ENCODE measurements at regions of chr1 and their contacts with region 1.

Region 1: GRCh38 chr1:93061895-93062792 is 16.9 kb upstream of the MTF2 start:
- DNase-seq: peak; percentile 86
- H3K4me3 ChIP-seq: no peak overlapping the region
- H3K27ac ChIP-seq: peak overlapping the region; percentile 44
- H3K4me1 ChIP-seq: peaks cover 28% of the 10 kb centered on the region
- CTCF ChIP-seq: peak; percentile 99

Region 2: DNA sequence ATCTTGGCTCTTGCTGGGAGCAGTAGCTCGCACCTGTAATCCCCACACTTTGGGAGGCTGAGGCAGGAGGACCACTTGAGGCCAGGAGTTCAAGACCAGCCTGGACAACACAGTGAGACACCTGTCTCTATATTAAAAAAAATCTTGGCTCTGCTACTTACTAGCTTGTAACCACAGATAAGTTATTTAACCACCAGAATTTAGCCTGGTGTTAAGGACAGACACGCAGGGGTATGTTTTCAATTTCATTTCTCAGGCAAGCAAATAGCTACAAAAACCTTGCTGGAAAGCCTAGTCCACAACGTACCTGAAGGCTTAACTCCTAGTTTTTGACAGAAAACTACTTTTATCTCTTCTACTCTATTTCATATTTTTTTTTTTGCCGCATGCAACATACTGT is 550.6 kb before region 1 on chr1:
- CTCF ChIA-PET with region 1: no interaction called
- POLR2A ChIA-PET with region 1: no interaction called
- intact Hi-C with region 1: no loop called
- DNase-seq: no peak
- H3K4me3 ChIP-seq: no peak overlapping the region
- H3K27ac ChIP-seq: no peak overlapping the region
- H3K4me1 ChIP-seq: no peaks in the 10 kb centered on the region
- CTCF ChIP-seq: no peak

Region 3: GRCh38 chr1:92858564-92859399 is 203.4 kb before region 1 on chr1:
- CTCF ChIA-PET with region 1: interaction called, 3 read pairs
- POLR2A ChIA-PET with region 1: interaction called, 4 read pairs
- intact Hi-C with region 1: loop called (anchors 1 kb)
- DNase-seq: peak; percentile 91
- H3K4me3 ChIP-seq: peak overlapping the region; percentile 56
- H3K27ac ChIP-seq: peak overlapping the region; percentile 65
- H3K4me1 ChIP-seq: peaks cover 28% of the 10 kb centered on the region
- CTCF ChIP-seq: peak; percentile 100

Region 4: GRCh38 chr1:92968138-92969032 is 93.8 kb before region 1 on chr1:
- CTCF ChIA-PET with region 1: interaction called, 3 read pairs
- POLR2A ChIA-PET with region 1: no interaction called
- intact Hi-C with region 1: loop called (anchors 1 kb)
- DNase-seq: peak; percentile 63
- H3K4me3 ChIP-seq: peak overlapping the region; percentile 5
- H3K27ac ChIP-seq: peak overlapping the region; percentile 58
- H3K4me1 ChIP-seq: peaks cover 92% of the 10 kb centered on the region
- CTCF ChIP-seq: peak; percentile 97

Region 5: DNA sequence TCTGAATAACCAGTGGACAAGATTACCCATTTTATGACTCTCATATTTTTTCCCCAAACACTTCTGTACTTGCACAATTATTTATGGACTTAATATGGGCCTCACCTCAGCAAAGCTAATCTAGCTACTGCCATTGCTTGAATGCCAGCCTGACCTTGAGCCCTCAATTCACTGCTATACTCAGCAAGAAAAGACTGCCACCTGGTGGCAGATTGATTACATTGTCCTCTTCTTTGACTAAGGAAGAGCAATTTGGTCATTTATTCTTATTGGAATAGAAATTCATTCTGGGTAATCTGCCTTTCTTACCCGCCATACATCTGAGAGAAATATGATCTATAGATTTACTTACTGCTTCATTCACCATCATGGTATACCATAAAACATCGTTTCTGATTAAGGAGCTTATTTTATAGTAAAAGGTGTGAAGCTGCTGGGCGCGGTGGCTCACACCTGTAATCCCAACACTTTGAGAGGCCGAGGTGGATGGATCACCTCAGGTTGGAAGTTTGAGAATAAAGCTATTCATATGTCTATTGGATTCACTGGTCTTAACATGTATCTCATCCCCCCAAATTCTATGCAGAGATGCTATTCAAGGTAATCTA is 67.9 kb before region 1 on chr1:
- CTCF ChIA-PET with region 1: interaction called, 14 read pairs
- POLR2A ChIA-PET with region 1: no interaction called
- intact Hi-C with region 1: loop called (anchors 1 kb)
- DNase-seq: peak; percentile 96
- H3K4me3 ChIP-seq: no peak overlapping the region
- H3K27ac ChIP-seq: peak overlapping the region; percentile 26
- H3K4me1 ChIP-seq: peaks cover 47% of the 10 kb centered on the region
- CTCF ChIP-seq: peak; percentile 98

Region 6: DNA sequence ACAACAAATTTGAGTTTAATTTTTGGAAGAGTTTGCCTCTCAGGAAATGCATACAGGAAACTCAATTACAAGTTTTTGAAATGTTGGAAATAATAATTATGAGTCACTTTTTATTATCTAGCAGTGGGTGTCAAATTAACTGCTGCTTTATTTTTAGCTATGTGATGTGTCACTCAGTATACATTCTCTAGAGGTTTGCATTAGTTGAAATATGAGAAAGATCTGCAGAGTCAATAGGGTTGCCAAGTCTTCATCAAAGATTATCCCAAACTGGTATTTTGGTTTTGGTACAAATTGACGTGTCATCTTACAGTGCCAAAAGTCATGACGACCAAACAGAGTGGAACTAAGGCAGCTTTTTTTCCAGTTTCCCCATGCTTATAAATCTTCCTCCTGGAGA is 46.6 kb before region 1 on chr1:
- CTCF ChIA-PET with region 1: interaction called, 26 read pairs
- POLR2A ChIA-PET with region 1: interaction called, 22 read pairs
- intact Hi-C with region 1: no loop called
- DNase-seq: no peak
- H3K4me3 ChIP-seq: no peak overlapping the region
- H3K27ac ChIP-seq: no peak overlapping the region
- H3K4me1 ChIP-seq: peaks cover 38% of the 10 kb centered on the region
- CTCF ChIP-seq: no peak

Region 7: GRCh38 chr1:93021539-93022134 is 40.5 kb before region 1 on chr1:
- CTCF ChIA-PET with region 1: interaction called, 40 read pairs
- POLR2A ChIA-PET with region 1: interaction called, 116 read pairs
- intact Hi-C with region 1: loop called (anchors 1 kb)
- DNase-seq: peak; percentile 87
- H3K4me3 ChIP-seq: peak overlapping the region; percentile 40
- H3K27ac ChIP-seq: peak overlapping the region; percentile 75
- H3K4me1 ChIP-seq: peaks cover 57% of the 10 kb centered on the region
- CTCF ChIP-seq: peak; percentile 100

Region 8: DNA sequence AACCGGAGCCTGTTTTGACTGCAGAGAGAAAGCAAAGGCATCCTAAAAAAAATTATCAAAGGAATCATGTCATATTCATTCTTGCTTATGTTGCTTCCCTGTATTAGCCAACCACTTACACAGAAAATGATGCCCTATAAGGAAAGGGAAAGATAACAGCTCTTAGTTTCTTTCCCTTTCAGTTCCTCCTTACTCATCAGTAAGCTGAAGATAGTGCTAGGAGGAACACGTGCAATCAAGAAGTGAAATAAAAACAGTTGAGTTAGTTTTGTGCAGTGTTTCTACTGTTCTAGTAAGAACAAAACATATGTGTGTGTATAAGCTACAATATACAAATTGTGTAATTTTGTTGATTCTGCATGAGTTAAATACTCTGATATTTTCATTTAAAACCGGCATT is 28.4 kb before region 1 on chr1:
- CTCF ChIA-PET with region 1: interaction called, 10 read pairs
- POLR2A ChIA-PET with region 1: interaction called, 34 read pairs
- intact Hi-C with region 1: no loop called
- DNase-seq: peak; percentile 77
- H3K4me3 ChIP-seq: peak overlapping the region; percentile 59
- H3K27ac ChIP-seq: peak overlapping the region; percentile 97
- H3K4me1 ChIP-seq: peaks cover 94% of the 10 kb centered on the region
- CTCF ChIP-seq: no peak

Measured in OCI-LY7 (cell line).